WTC11 (cell line): ENCODE measurements at regions of chr7 and their contacts with region 1.

Region 1: GRCh38 chr7:34321000-34321581 is 336.9 kb upstream of the NPSR1 start:
- DNase-seq: peak; percentile 74
- ATAC-seq: peak; percentile 97
- H3K4me3 Mint-ChIP-seq: peak overlapping the region; percentile 59
- H3K27ac Mint-ChIP-seq: no peak overlapping the region
- H3K4me1 Mint-ChIP-seq: peaks cover 6% of the 10 kb centered on the region
- H3K27me3 Mint-ChIP-seq: no peaks in the 10 kb centered on the region
- CTCF ChIP-seq: peak; percentile 86

Region 2: DNA sequence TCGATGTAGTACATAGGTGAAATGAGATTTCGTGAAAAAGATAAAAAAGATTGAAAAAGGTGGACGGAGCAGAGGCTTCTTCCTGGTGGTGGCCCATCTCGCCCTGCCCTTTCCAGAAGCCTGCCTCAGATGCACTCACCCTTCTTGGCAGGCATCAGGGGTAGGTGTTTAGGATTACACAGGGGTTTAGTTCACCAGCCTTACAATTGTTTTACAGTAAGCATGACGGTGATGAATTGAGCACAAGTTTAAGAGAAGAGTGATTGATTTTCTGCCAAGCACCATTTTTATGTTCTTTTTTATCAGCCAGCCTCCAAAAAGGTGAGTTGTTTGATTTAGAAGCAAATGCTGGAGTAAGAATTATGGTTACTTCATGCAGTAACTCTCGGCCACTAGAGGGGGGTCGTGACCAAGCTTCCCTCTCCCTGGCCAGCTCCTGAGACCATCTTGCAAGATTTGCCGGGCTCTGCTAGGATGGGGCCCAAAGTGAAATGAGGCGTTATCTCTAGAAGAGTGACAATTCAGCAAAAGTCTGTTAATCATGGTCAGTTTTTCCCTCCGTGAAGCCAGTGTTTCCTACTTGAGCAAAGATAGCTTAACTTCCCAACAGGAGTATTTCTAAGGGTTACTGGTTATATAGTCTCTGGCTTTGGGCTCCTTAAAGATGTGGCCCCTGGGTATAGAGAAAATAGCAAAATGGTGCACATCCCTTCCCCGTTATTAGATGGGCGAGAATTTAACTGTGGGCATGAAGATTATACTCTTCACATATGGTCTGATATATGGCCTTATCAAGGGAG is 186.9 kb before region 1 on chr7:
- CTCF ChIA-PET with region 1: interaction called, 17 read pairs
- POLR2A ChIA-PET with region 1: no interaction called
- DNase-seq: peak; percentile 89
- ATAC-seq: peak; percentile 92
- H3K4me3 Mint-ChIP-seq: no peak overlapping the region
- H3K27ac Mint-ChIP-seq: 0 out of 2 replicates have a peak overlapping the region, but pooled peaks have one; percentile 13
- H3K4me1 Mint-ChIP-seq: peaks cover 12% of the 10 kb centered on the region
- H3K27me3 Mint-ChIP-seq: no peaks in the 10 kb centered on the region
- CTCF ChIP-seq: peak; percentile 67

Region 3: DNA sequence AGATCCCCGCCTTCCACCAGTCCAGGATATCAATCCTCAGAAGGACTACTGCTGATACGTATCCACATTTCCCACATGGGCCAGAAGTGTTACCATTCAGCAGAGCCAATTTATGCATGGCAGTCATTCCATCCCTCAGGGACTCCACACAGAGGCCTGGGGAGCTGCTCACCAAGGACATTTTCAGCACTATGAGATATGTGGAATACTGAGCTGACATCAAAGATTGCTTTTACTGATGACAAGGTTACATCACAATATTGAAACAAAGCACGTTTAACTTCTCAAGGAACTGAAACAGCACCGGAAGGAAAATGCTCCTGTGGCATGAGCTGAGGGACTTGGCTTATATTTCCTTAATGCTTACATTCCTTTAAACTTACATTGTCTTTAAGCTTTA is 80.7 kb before region 1 on chr7:
- CTCF ChIA-PET with region 1: no interaction called
- POLR2A ChIA-PET with region 1: no interaction called
- DNase-seq: no peak
- ATAC-seq: no peak
- H3K4me3 Mint-ChIP-seq: no peak overlapping the region
- H3K27ac Mint-ChIP-seq: no peak overlapping the region
- H3K4me1 Mint-ChIP-seq: peaks cover 6% of the 10 kb centered on the region
- H3K27me3 Mint-ChIP-seq: no peaks in the 10 kb centered on the region; the same call in 1 of the 2 replicates
- CTCF ChIP-seq: no peak

Region 4: GRCh38 chr7:34296663-34297062 is 24.4 kb before region 1 on chr7:
- CTCF ChIA-PET with region 1: interaction called, 15 read pairs
- POLR2A ChIA-PET with region 1: no interaction called
- DNase-seq: no peak
- ATAC-seq: no peak
- H3K4me3 Mint-ChIP-seq: no peak overlapping the region
- H3K27ac Mint-ChIP-seq: no peak overlapping the region
- H3K4me1 Mint-ChIP-seq: peaks cover 44% of the 10 kb centered on the region
- H3K27me3 Mint-ChIP-seq: no peaks in the 10 kb centered on the region
- CTCF ChIP-seq: no peak

Region 5: DNA sequence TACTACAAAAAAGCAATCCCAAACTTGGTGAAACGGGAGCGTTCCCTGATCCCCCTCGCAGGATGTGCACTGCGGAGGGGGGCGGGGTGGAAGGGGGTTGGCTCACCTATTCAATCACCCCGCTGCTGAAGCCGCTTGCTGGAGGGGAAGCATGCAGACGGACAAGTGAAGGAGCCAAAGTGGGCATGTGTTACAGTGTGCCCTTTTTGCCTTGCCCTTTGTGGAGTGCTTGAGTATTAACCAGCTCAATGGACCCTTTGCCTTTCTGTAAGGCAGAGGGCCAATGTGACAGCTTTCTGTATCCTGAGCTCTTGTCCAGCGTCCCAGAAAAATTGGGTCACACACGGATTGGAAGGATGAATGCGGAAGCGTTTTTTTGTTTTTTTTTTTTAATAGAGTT is 12.0 kb before region 1 on chr7:
- CTCF ChIA-PET with region 1: interaction called, 12 read pairs
- POLR2A ChIA-PET with region 1: no interaction called
- DNase-seq: no peak
- ATAC-seq: no peak
- H3K4me3 Mint-ChIP-seq: no peak overlapping the region
- H3K27ac Mint-ChIP-seq: no peak overlapping the region
- H3K4me1 Mint-ChIP-seq: peaks cover 6% of the 10 kb centered on the region; the same call in 1 of the 2 replicates
- H3K27me3 Mint-ChIP-seq: no peaks in the 10 kb centered on the region
- CTCF ChIP-seq: no peak

Region 6: DNA sequence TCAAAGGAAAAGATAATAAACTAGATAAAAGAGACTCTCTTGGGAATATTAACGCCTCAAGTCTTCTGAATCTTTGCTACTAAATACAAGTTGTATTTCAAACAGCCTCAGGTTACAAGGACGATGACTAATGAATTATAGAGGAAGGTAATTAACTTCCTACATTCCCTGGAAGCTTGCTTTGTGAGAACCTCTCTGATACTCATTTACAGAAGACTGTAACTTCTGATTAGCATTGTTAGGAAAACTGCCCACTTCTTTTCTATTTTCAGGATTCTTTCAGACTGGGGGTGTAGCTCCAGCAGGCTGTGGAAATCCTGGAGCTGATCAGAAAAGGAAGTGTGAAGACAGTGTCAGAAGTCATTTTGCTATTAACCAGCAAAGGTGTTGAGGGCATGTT is 20.2 kb after region 1 on chr7:
- CTCF ChIA-PET with region 1: interaction called, 14 read pairs
- POLR2A ChIA-PET with region 1: no interaction called
- DNase-seq: no peak
- ATAC-seq: peak; percentile 53
- H3K4me3 Mint-ChIP-seq: no peak overlapping the region
- H3K27ac Mint-ChIP-seq: no peak overlapping the region
- H3K4me1 Mint-ChIP-seq: peaks cover 13% of the 10 kb centered on the region
- H3K27me3 Mint-ChIP-seq: no peaks in the 10 kb centered on the region
- CTCF ChIP-seq: no peak

Region 7: DNA sequence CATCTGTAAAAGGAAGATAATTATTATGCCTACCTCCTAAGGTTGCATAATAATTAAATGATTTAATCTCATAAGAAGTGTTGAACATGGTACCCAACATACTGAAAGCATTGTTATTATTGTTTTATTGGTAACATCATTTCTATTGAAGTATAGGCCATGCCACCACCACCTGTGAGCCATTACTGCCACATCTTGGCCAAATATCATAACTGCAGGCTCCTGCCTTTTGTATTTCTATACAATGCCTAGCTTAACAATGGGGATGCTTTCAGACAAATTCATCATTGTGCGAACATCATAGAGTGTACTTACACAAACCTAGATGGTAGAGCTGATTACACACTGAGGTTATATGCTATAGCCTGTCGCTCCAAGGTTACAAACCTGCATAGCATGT is 275.8 kb after region 1 on chr7:
- CTCF ChIA-PET with region 1: interaction called, 44 read pairs
- POLR2A ChIA-PET with region 1: no interaction called
- DNase-seq: peak; percentile 15
- ATAC-seq: peak; percentile 73
- H3K4me3 Mint-ChIP-seq: no peak overlapping the region
- H3K27ac Mint-ChIP-seq: no peak overlapping the region
- H3K4me1 Mint-ChIP-seq: peaks cover 28% of the 10 kb centered on the region
- H3K27me3 Mint-ChIP-seq: no peaks in the 10 kb centered on the region
- CTCF ChIP-seq: peak; percentile 42; the same call in 1 of the 2 replicates